ENCODE measurements at regions of chr1 and their contacts with region 1.

Region 1: DNA sequence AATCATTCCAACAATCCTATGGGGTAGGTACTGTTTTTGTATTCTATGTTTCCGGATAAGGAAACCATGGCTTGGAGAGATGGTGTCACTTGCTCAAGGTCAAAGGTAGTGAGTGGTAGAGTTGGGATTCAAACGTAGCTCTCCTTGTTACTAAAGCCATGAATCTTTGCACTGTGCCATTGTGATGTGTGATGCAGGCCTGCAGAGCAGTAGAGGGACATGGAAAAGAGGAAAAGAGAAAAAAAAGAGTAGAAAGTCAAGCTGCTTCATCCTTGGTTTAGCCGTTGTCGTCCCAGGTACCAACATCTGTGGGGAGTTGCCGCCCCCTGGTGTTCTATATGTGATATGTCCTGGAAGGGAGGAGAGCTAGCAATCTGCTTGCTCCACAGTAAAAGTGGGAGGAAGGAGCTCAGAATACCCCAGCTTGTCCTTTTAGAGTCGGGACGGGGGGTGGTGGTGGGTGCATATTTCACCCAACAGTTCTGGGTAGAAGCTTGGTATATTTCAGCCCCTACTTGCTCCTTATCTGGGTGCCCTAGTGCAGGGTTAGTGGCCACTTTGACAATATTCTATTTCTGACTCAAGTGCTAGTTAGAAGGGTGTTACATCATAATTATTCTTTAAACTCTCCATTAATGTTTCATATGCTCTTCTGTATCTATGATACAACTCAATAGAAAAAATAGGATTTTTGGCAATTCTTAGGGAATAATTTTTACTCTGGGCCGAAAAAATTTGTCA is 98.4 kb downstream of the EBNA1BP2 start:
- ATAC-seq: peak; percentile 77 to 95 (median 86)
- H3K4me3 ChIP-seq: peak overlapping the region in 1 of 5 donors; percentile 9
- H3K27ac ChIP-seq: no peak overlapping the region
- H3K4me1 ChIP-seq: peaks cover 21 to 23% of the 10 kb centered on the region in 2 donors

Region 2: GRCh38 chr1:41573785-41574713 is 1499.6 kb before region 1 on chr1:
- in situ Hi-C with region 1: loop called in 1 of 9 experiments (anchors 25 kb)
- ATAC-seq: peak; percentile 95 to 100 (median 99)
- H3K4me3 ChIP-seq: no peak overlapping the region
- H3K27ac ChIP-seq: no peak overlapping the region
- H3K4me1 ChIP-seq: peaks cover 0 to 5% of the 10 kb centered on the region in 2 donors

Region 3: DNA sequence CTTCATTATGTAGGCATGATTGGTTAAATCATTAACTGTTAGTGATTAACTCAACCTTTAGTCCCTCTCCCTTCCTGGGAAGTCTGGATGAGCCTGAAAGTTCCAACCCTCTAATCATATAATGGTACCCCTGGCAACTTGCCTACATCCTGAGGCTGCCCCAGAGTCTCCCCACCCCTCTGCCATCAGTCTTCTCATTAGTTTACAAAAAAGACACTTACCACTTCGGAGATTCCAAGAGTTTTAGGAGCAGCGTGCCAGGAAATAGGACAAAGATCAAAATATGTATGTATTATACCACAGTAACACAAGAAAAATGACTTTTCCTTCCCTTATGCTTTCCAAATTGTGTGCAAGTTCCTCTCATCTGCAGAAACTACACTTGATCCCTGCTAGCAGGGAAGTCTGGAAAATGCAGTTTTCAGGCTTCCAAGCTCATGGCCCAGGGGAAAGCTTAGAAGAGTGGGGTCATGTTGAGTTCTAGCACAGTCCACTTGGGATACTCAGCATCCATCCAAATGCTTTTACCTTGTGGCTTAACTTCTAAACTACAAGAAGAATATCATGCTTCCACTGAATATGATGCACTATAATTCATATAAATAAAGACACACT is 480.1 kb before region 1 on chr1:
- in situ Hi-C with region 1: loop called in 1 of 9 experiments (anchors 25 kb)
- ATAC-seq: no peak
- H3K4me3 ChIP-seq: no peak overlapping the region
- H3K27ac ChIP-seq: no peak overlapping the region
- H3K4me1 ChIP-seq: no peaks in the 10 kb centered on the region

Region 4: GRCh38 chr1:42713293-42713692 is 360.4 kb before region 1 on chr1:
- in situ Hi-C with region 1: no loop called
- ATAC-seq: no peak
- H3K4me3 ChIP-seq: no peak overlapping the region
- H3K27ac ChIP-seq: no peak overlapping the region
- H3K4me1 ChIP-seq: no peaks in the 10 kb centered on the region

Region 5: GRCh38 chr1:42913426-42914091 is 160.1 kb before region 1 on chr1:
- in situ Hi-C with region 1: loop called in 3 of 9 experiments (anchors 10 to 25 kb)
- ATAC-seq: peak; percentile 36 to 90 (median 56)
- H3K4me3 ChIP-seq: no peak overlapping the region
- H3K27ac ChIP-seq: no peak overlapping the region
- H3K4me1 ChIP-seq: no peaks in the 10 kb centered on the region

Region 6: GRCh38 chr1:42958488-42959319 is 115.0 kb before region 1 on chr1 and contains the start of gene SLC2A1:
- in situ Hi-C with region 1: loop called in 1 of 9 experiments (anchors 25 kb)
- ATAC-seq: peak; percentile 53 to 83 (median 71)
- H3K4me3 ChIP-seq: peak within 1 kb of the TSS; percentile 57 to 68 (median 65)
- H3K27ac ChIP-seq: peak within 1 kb of the TSS; percentile 79 to 84
- H3K4me1 ChIP-seq: peaks cover 53 to 73% of the 10 kb centered on the region in 2 donors
- total RNA-seq, gene SLC2A1: 44.2 to 523 (median 315) TPM

Region 7: DNA sequence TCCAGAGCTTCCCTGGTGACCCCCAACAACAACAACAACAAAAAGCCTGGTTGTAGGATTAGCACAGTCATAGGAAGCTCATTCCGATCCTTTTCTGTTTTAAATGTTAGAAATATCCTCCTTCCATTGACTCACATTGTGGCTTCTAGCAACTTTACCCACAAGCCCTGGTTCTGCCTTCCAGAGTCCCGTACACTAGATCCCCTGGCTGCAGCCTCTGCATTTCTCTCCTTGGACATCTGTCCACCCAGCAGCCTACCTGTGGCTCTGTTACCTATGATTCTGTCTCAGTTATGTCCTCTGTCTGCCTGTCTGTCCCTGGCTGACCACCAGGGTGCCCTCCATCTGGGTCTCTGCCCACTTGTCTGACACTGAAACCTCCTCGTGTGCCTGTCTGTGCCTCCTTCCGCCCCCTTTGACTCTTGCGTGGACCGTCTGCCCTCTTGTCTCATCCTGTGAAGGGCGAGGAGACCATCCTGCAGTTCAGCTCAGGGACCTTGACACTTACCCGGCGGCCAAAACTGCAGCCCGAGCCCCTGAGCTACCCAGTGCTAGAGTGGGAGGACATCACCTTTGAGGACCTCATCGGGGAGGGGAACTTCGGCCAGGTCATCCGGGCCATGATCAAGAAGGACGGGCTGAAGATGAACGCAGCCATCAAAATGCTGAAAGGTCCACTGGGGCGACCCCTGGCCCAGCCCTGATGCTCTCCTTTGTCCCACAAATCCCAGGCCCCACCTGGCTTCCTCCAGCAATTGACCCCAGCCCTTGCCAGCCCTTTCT is 243.3 kb after region 1 on chr1:
- in situ Hi-C with region 1: no loop called
- ATAC-seq: peak in 1 of 8 experiments; percentile 18
- H3K4me3 ChIP-seq: no peak overlapping the region
- H3K27ac ChIP-seq: no peak overlapping the region
- H3K4me1 ChIP-seq: no peaks in the 10 kb centered on the region

Measured in motor neuron (in vitro differentiated cells).